ENCODE measurements at regions of chr21 and their contacts with region 1.

Region 1: DNA sequence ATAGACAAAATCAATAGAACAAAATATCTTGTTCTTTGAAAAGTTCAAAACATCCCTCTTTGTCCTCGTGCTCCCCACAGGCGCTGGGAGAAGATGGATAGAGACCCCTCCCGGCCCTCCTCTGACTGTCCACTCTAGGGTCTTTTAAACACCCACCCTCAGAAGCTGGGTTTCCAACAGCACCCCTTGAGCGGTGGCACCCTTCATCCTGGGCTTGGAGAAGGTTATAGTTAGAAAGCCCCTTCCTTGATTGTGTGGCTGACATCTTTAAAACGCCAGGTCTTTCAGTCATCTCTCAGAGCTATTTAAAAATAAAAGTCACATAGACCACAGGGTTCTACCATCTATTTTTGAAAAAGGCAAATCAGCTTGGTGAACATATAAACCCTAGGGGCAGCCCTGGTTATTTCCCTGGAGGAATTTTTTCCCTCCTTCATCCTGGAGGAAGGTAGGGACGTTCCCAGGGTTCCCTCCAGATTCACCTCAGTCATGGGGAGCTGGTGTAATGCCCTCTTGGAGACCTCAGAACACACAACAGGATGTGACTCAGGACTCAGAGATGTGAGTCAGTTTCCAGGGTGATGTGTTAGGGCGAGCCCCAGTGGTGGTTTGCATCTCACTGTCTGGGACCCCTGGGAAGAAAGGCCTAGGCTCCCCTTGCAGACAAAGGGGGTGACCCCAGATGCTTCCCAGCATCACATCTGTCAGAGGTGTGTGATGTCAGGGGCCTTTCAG is 138.5 kb downstream of the CLIC6 start:
- DNase-seq: peak; percentile 85
- H3K4me3 Mint-ChIP-seq: peak overlapping the region; percentile 57
- H3K27ac Mint-ChIP-seq: peak overlapping the region; percentile 89
- H3K4me1 Mint-ChIP-seq: peaks cover 89% of the 10 kb centered on the region
- H3K27me3 Mint-ChIP-seq: no peaks in the 10 kb centered on the region

Region 2: DNA sequence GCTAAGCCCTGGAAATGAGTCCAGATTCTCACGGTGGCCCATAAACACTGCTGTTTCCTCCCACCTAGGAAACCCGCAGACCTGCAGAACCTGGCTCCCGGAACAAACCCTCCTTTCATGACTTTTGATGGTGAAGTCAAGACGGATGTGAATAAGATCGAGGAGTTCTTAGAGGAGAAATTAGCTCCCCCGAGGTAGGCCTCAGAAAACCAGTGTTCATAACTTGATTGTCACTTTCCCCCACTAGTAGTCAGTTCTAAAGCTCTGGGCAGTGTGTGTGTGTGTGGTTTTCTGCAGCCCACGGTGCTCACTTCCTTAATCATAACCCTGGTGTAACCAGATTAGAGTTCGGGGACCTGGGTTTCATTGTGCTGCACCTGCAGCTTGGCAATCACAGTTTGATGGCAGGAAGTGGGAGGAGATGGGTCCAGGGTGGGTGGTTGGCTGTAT is 99.4 kb before region 1 on chr21:
- CTCF ChIA-PET with region 1: no interaction called
- POLR2A ChIA-PET with region 1: interaction called, 3 read pairs
- intact Hi-C with region 1: loop called (anchors 5 kb)
- DNase-seq: peak; percentile 85
- H3K4me3 Mint-ChIP-seq: no peak overlapping the region
- H3K27ac Mint-ChIP-seq: peak overlapping the region; percentile 15
- H3K4me1 Mint-ChIP-seq: peaks cover 20% of the 10 kb centered on the region
- H3K27me3 Mint-ChIP-seq: peaks cover 41% of the 10 kb centered on the region

Region 3: GRCh38 chr21:34836103-34836932 is 29.0 kb after region 1 on chr21:
- CTCF ChIA-PET with region 1: interaction called, 3 read pairs
- POLR2A ChIA-PET with region 1: interaction called, 3 read pairs
- intact Hi-C with region 1: loop called (anchors 2 kb)
- DNase-seq: peak; percentile 72
- H3K4me3 Mint-ChIP-seq: no peak overlapping the region
- H3K27ac Mint-ChIP-seq: peak overlapping the region; percentile 19
- H3K4me1 Mint-ChIP-seq: peaks cover 55% of the 10 kb centered on the region
- H3K27me3 Mint-ChIP-seq: no peaks in the 10 kb centered on the region

Region 4: DNA sequence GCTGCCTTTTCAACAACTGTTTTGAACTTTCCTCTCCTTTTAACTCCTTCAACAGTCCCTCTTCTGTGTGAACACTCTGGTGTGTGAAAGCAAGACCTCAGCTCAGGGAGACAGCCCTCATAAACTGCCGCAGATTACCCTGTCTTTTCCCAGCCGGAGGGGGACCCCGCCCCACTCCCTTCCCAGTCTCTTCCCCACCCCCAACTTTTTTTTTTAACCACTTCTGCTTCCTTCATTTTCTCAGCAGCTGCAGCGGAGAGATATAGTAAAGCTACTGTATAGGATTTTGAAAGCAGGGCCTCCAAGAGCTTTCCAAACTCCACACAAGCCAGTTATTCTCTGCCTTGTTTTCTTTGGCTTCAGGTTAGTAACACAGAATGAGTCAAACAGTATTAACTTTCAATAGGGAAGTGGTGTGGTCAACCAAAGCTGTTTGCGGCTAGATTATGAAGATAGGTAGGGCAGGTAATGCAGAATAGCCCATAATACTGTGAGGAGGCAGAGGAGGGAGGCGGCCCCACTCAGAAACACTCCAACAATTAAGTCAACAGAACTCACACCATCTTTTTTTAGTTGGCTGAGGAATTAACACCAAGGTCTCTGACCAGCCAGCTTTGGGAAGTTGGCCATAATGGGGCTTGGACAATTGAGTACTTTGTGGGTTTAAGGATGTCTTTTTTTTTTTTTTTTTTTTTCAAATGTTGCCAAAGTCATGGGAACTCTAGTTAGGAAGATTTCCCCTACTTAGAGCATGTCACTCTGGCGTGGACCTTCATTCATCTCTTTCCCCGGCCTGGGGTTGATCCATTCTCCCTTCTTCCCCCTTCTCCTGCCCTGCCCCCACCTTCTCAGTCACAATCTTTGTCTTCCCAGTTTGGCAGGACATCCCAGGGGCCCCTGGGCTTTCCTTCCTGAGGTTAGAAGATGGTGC is 38.5 kb after region 1 on chr21:
- CTCF ChIA-PET with region 1: no interaction called
- POLR2A ChIA-PET with region 1: interaction called, 3 read pairs
- intact Hi-C with region 1: loop called (anchors 2 kb)
- DNase-seq: peak; percentile 69
- H3K4me3 Mint-ChIP-seq: peak overlapping the region; percentile 7
- H3K27ac Mint-ChIP-seq: peak overlapping the region; percentile 66
- H3K4me1 Mint-ChIP-seq: peaks cover 51% of the 10 kb centered on the region
- H3K27me3 Mint-ChIP-seq: no peaks in the 10 kb centered on the region

Region 5: DNA sequence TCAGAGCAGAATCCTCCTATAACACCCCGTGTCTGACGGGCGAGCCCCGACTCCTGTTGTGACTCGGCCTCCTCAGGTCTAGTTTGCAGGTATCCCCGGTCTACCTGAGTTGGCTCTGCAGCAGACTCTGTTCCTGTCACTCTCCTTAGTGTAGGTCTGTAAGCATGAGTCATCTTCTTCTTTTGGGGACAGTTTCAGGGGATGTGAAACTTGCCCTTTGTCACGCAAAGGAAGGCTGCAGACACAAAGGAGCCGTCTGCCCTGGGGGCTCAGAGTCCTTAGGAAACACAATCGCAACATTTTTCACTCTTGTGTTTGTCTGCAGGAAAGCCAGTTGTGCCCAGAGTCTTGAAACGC is 58.6 kb after region 1 on chr21:
- CTCF ChIA-PET with region 1: no interaction called
- POLR2A ChIA-PET with region 1: no interaction called
- intact Hi-C with region 1: loop called (anchors 5 kb)
- DNase-seq: peak; percentile 74
- H3K4me3 Mint-ChIP-seq: peak overlapping the region; percentile 27
- H3K27ac Mint-ChIP-seq: peak overlapping the region; percentile 68
- H3K4me1 Mint-ChIP-seq: peaks cover 62% of the 10 kb centered on the region
- H3K27me3 Mint-ChIP-seq: no peaks in the 10 kb centered on the region

Region 6: DNA sequence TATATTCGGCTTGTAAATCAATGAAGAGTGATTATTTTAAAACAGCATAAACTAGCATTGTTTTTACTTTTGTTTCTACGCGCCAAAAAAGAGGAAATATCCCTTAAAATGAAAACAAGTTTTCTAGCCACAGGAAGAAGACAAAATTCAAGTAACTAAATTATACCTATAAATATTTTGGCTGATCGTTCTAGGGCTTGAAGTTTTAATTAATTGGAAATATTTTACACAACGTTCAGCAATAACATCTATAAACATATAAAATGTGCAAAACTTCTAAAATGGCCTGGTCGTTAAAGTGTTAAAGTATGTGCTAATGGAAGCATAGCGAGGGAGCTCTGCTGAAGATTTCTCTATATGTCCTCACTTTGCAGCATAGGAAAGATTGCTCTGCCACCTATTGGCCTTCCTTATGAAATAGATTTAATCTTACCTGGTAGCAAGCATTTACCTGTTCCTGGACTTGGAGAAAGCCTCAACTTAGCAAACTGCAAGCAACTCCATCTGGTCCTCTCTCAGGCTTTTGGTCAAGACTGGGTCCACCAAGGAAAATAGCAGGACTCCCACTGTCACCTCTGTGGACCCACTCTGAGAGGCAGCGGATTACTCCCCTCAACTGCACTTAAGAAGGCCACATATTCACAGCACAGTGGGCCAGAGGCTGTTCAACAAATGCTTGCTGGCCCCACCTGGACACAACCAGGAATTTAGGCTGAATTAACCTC is 593.1 kb after region 1 on chr21:
- CTCF ChIA-PET with region 1: interaction called, 3 read pairs
- POLR2A ChIA-PET with region 1: no interaction called
- intact Hi-C with region 1: loop called (anchors 5 kb)
- DNase-seq: peak; percentile 37
- H3K4me3 Mint-ChIP-seq: no peak overlapping the region
- H3K27ac Mint-ChIP-seq: no peak overlapping the region
- H3K4me1 Mint-ChIP-seq: peaks cover 24% of the 10 kb centered on the region
- H3K27me3 Mint-ChIP-seq: peaks cover 3% of the 10 kb centered on the region

Measured in activated CD4-positive, alpha-beta memory T cell treated with anti-CD3 and anti-CD28 coated beads for 36 hours (primary cell).